ENCODE measurements at regions of chr10 and their contacts with region 1.

Region 1: DNA sequence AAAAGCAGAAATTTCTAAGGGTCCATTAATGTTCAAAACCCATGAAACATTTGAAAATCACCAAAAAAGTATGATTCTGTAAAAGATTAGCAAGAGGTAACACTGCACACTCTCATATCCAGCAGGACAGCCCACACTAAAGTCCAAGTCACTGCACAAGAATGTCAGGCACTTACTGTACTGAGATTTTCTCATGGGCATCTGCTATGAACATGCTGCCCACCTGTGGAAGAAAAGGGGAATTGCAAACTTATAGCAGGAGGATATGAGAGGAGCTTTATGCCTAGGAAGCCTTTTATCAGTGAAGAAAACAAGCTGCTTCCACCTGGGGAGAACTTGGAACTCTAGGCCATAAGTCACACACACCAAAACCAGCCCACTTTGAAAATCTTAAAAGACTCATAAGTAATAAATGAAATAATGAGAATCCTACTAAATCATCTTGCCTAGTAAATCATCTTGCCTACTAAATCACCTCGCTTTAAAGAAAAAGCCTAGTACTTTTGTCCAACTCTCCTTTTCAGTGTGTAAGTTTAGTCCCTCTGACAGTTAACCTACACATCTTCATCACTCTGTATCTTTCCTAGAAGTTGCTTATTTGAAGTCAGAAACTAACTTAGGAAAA is 46.1 kb downstream of the ARMH3 start:
- DNase-seq: peak in 1 of 3 donors; percentile 48
- ATAC-seq: peak; percentile 93 to 100 (median 98)
- H3K4me3 ChIP-seq: no peak overlapping the region
- H3K27ac ChIP-seq: no peak overlapping the region
- H3K4me1 ChIP-seq: no peaks in the 10 kb centered on the region
- H3K27me3 ChIP-seq: no peaks in the 10 kb centered on the region
- CTCF ChIP-seq: peak; percentile 84 to 95 (median 90)
- POLR2A ChIP-seq: no peak

Region 2: DNA sequence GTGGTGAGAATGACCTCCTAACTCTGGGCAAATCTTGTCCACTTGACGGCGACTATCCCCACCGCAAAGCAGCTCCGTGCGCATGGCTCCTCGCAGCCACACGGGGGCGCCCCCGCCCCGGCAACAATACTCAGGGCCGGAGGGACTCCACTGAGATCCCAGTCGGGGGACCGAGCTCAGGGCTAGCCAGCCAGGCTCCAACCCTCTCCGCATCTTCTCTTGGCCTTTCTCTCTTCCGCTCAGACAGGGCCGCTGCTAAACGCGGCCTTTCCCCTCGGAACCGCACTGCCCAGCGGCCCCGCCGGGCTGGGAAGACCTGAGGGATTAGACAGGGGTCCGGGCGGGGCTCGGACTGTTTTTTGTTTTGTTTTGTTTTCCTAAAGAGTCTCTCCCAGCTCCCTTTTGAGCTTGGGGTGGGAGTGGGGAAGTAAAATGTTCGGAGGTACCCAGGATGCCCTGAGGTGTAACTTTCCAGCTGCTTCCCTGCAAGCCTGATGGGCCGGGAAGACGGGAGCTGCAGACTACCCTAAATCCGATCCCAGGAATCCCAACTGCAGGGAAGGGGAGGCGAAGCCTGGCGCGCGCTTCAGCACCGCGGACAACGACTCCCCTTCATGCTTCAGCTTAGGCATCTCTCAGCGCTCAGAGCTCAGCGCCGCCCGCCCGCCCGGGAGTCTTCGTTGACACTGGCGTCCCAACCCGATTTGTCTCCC is 169.0 kb before region 1 on chr10:
- intact Hi-C with region 1: loop called in 1 of 2 experiments (anchors 5 kb)
- DNase-seq: peak; percentile 81 to 85 (median 82)
- ATAC-seq: peak; percentile 83 to 87 (median 86)
- H3K4me3 ChIP-seq: peak overlapping the region; percentile 9 to 38 (median 27)
- H3K27ac ChIP-seq: no peak overlapping the region
- H3K4me1 ChIP-seq: peaks cover 0 to 9% (median 2%) of the 10 kb centered on the region in 4 donors
- H3K27me3 ChIP-seq: no peaks in the 10 kb centered on the region
- CTCF ChIP-seq: peak; percentile 87 to 96 (median 95)
- POLR2A ChIP-seq: no peak

Region 3: DNA sequence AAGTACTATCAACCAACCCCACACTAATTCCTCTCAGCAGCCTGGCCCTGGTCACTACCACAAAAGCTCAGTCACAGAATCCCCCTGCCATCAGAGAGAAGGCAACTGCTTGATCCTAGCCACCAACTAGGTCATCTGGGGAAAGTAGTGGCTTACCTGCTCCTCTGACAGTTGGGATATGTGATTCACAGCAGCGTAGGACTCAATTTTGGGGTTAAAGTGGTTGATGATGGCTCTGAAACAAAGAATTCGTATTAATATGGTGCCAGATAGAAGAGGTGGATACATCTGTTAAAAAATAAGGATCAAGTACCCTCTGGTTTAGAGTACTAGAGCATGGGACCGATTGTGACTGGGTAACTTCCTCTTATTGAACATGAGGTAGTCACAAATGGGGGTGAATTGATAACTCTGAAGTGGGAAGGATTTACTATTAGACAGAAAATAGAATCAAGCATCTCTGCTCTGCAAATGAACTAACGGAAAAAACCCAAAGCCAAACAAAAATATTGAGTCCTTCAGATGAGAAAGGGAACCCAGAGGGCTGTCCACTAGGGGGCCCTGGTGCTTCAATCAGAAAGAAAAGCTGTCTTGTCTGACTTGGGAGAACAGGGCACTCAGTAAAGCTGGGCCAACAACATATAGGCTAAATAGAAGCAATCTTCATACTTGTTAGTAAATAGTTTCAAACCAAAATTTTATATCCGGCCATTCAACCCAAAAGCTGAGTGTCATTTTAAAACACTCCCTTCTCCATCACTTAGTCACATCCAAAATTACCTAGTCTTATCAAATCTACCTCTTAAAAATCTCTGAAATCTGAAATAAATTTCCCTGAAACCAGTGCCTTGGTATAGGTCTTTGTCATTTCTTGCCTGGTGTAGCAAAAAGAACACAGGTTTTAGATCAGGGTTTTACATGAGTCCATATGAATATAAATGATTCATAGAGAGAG is 120.4 kb before region 1 on chr10:
- intact Hi-C with region 1: loop called in 1 of 2 experiments (anchors 10 kb)
- DNase-seq: peak; percentile 63 to 75 (median 72)
- ATAC-seq: peak; percentile 77 to 86 (median 82)
- H3K4me3 ChIP-seq: no peak overlapping the region
- H3K27ac ChIP-seq: no peak overlapping the region
- H3K4me1 ChIP-seq: peaks cover 0 to 3% (median 0%) of the 10 kb centered on the region in 4 donors
- H3K27me3 ChIP-seq: no peaks in the 10 kb centered on the region
- CTCF ChIP-seq: peak; percentile 68 to 84 (median 82)
- POLR2A ChIP-seq: no peak